ENCODE measurements at regions of chr11 and their contacts with region 1.

Region 1: DNA sequence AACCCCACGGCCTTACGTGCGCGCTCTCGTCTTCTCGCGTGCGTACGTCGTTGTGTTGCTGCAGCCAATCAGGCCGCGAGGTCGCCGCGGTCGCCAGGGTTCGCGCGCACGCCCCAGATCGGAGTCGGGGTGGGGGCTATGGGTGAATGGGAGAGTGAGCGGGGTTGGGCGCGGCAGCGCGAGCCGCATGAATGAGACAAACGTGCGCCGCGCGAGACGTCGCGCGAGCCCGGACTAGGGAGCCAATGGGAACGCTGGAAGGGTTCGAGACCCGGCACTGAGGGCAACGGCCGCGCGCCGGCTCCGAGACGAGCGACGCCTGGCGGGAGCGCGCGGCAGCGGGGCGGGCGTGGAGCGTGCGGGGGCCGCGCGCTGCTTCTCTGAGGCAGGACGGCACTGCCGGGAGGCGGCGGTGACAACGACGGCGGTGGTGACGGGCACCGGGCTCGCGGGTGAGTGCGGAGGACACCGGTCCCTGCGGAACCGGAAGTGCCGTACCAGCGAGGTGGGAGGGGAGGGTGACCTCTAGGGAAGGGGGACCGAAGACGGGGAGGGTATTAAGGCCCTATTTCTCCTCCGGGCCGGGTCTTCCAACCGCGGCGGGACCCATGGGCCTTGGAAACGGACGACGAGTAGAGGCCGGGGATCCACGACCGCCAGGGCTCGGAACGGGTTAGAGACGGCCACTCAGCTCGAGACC is at the start of gene ZDHHC5:
- DNase-seq: peak; percentile 99
- ATAC-seq: peak; percentile 91
- H3K4me3 ChIP-seq: peak within 1 kb of the TSS; percentile 90
- H3K27ac ChIP-seq: peak within 1 kb of the TSS; percentile 99
- H3K4me1 ChIP-seq: peaks cover 7% of the 10 kb centered on the region
- H3K27me3 ChIP-seq: no peaks in the 10 kb centered on the region
- CTCF ChIP-seq: peak; percentile 25 to 37 (median 34); a peak in 4 of 6 replicates
- EP300 ChIP-seq: no peak
- POLR2A ChIP-seq: peak; percentile 98
- RAD21 ChIP-seq: no peak
- polyA plus RNA-seq, gene ZDHHC5: 3.9 to 7.3 TPM

Region 2: GRCh38 chr11:57635236-57635635 is 32.6 kb before region 1 on chr11:
- CTCF ChIA-PET with region 1: no interaction called
- POLR2A ChIA-PET with region 1: no interaction called
- RAD21 ChIA-PET with region 1: no interaction called
- SMC1A ChIA-PET with region 1: no interaction called
- in situ Hi-C with region 1: no loop called
- intact Hi-C with region 1: no loop called
- DNase-seq: no peak
- ATAC-seq: no peak
- H3K4me3 ChIP-seq: no peak overlapping the region
- H3K27ac ChIP-seq: no peak overlapping the region
- H3K4me1 ChIP-seq: peaks cover 9% of the 10 kb centered on the region; the same call in 1 of the 2 replicates
- H3K27me3 ChIP-seq: no peaks in the 10 kb centered on the region; a peak in 2 of 4 replicates
- CTCF ChIP-seq: no peak
- EP300 ChIP-seq: no peak
- POLR2A ChIP-seq: no peak
- RAD21 ChIP-seq: no peak

Region 3: GRCh38 chr11:57657194-57658022 is 10.5 kb before region 1 on chr11 and contains the start of gene CLP1:
- CTCF ChIA-PET with region 1: interaction called, 3 read pairs
- POLR2A ChIA-PET with region 1: interaction called, 7 read pairs
- RAD21 ChIA-PET with region 1: interaction called, 3 read pairs
- SMC1A ChIA-PET with region 1: interaction called, 14 read pairs
- in situ Hi-C with region 1: no loop called
- intact Hi-C with region 1: loop called (anchors 1 kb)
- DNase-seq: peak; percentile 94
- ATAC-seq: peak; percentile 99
- H3K4me3 ChIP-seq: peak within 1 kb of the TSS; percentile 91
- H3K27ac ChIP-seq: peak within 1 kb of the TSS; percentile 75
- H3K4me1 ChIP-seq: peaks cover 6% of the 10 kb centered on the region; the same call in 1 of the 2 replicates
- H3K27me3 ChIP-seq: no peaks in the 10 kb centered on the region
- CTCF ChIP-seq: no peak
- EP300 ChIP-seq: no peak
- POLR2A ChIP-seq: peak; percentile 81
- RAD21 ChIP-seq: no peak
- polyA plus RNA-seq, gene CLP1: 33.6 to 45.7 TPM

Region 4: DNA sequence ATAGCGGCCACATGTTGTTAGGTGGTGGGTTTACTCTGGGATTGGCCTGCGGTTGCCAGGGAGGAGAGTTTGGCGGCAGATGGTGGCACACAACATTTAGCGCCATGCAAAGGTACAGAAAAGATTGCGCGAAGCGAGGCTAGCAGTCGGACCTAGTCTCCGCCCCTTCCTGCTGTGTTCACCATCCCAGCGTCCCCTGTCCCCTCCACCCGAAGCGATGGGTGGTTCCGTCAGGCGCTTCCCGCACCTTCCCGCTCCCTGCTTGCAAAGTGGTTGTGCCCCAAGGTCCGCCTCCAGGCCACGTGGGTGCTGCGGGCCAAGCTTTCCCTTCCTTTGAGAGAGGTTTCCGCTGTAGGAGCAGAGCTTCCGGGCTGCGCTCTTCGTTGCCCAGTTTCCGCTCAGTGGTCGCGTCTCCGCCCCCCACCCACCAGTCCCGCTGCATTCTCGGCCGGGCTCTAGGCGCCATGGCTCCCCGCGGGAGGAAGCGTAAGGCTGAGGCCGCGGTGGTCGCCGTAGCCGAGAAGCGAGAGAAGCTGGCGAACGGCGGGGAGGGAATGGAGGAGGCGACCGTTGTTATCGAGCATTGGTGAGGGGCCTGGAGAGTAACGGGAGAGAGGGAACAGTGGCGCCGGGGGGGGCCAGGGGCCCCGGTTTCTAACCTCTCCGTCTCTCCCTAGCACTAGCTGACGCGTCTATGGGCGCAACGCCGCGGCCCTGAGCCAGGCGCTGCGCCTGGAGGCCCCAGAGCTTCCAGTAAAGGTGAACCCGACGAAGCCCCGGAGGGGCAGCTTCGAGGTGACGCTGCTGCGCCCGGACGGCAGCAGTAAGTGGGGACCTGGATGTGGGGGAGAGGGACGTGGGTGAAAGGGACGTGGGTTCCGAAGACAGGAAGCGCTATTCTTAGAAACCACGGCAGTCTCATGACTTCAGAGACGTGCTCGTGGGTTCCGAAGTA is 73.5 kb after region 1 on chr11 and contains the start of gene SELENOH:
- CTCF ChIA-PET with region 1: no interaction called
- POLR2A ChIA-PET with region 1: interaction called, 5 read pairs
- RAD21 ChIA-PET with region 1: no interaction called
- SMC1A ChIA-PET with region 1: interaction called, 3 read pairs
- in situ Hi-C with region 1: no loop called
- intact Hi-C with region 1: loop called (anchors 1 kb)
- DNase-seq: peak; percentile 95
- ATAC-seq: peak; percentile 95
- H3K4me3 ChIP-seq: peak within 1 kb of the TSS; percentile 95
- H3K27ac ChIP-seq: peak within 1 kb of the TSS; percentile 96
- H3K4me1 ChIP-seq: no peaks in the 10 kb centered on the region
- H3K27me3 ChIP-seq: no peaks in the 10 kb centered on the region
- CTCF ChIP-seq: no peak
- EP300 ChIP-seq: peak in 1 of 2 experiments; percentile 51; a peak in 1 of 4 replicates
- POLR2A ChIP-seq: peak; percentile 99
- RAD21 ChIP-seq: no peak
- polyA plus RNA-seq, gene SELENOH: 20.3 to 101 TPM

Region 5: DNA sequence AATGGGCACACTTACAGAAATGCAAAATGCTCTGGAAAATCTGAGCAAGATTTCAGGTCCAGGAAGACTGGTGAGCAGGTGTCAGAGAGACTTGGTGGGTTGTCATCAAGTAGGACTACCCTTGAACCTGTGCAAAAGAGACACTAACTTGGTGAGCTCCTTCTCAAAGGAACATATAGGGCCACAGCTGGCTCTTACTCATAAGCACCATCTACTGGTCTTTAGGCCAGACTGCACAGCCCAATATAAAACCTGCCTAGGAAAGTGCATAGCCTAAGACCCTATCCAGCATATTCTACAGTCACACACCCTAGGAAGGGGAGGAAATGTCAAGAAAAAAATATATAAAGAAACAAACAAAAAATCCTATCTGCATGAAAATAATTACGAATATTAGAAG is 618.4 kb after region 1 on chr11:
- CTCF ChIA-PET with region 1: interaction called, 7 read pairs
- POLR2A ChIA-PET with region 1: no interaction called
- RAD21 ChIA-PET with region 1: interaction called, 5 read pairs
- SMC1A ChIA-PET with region 1: interaction called, 3 read pairs
- in situ Hi-C with region 1: no loop called
- intact Hi-C with region 1: loop called (anchors 5 kb)
- DNase-seq: no peak
- ATAC-seq: peak; percentile 89
- H3K4me3 ChIP-seq: no peak overlapping the region
- H3K27ac ChIP-seq: no peak overlapping the region
- H3K4me1 ChIP-seq: no peaks in the 10 kb centered on the region
- H3K27me3 ChIP-seq: no peaks in the 10 kb centered on the region
- CTCF ChIP-seq: peak; percentile 61 to 68 (median 62)
- EP300 ChIP-seq: no peak
- POLR2A ChIP-seq: no peak
- RAD21 ChIP-seq: peak; percentile 65

Region 6: GRCh38 chr11:58524232-58525036 is 856.5 kb after region 1 on chr11:
- CTCF ChIA-PET with region 1: interaction called, 3 read pairs
- POLR2A ChIA-PET with region 1: no interaction called
- RAD21 ChIA-PET with region 1: no interaction called
- SMC1A ChIA-PET with region 1: no interaction called
- in situ Hi-C with region 1: loop called (anchors 10 kb)
- intact Hi-C with region 1: no loop called
- DNase-seq: peak; percentile 39
- ATAC-seq: peak; percentile 68
- H3K4me3 ChIP-seq: peak overlapping the region; percentile 49; the same call in 1 of the 2 replicates
- H3K27ac ChIP-seq: peak overlapping the region; percentile 75
- H3K4me1 ChIP-seq: peaks cover 30% of the 10 kb centered on the region
- H3K27me3 ChIP-seq: no peaks in the 10 kb centered on the region
- CTCF ChIP-seq: peak; percentile 70 to 77 (median 72)
- EP300 ChIP-seq: no peak
- POLR2A ChIP-seq: peak; percentile 21; the same call in 1 of the 2 replicates
- RAD21 ChIP-seq: peak; percentile 72